GM12878 (cell line): ENCODE measurements at regions of chr9 and their contacts with region 1.

Region 1: DNA sequence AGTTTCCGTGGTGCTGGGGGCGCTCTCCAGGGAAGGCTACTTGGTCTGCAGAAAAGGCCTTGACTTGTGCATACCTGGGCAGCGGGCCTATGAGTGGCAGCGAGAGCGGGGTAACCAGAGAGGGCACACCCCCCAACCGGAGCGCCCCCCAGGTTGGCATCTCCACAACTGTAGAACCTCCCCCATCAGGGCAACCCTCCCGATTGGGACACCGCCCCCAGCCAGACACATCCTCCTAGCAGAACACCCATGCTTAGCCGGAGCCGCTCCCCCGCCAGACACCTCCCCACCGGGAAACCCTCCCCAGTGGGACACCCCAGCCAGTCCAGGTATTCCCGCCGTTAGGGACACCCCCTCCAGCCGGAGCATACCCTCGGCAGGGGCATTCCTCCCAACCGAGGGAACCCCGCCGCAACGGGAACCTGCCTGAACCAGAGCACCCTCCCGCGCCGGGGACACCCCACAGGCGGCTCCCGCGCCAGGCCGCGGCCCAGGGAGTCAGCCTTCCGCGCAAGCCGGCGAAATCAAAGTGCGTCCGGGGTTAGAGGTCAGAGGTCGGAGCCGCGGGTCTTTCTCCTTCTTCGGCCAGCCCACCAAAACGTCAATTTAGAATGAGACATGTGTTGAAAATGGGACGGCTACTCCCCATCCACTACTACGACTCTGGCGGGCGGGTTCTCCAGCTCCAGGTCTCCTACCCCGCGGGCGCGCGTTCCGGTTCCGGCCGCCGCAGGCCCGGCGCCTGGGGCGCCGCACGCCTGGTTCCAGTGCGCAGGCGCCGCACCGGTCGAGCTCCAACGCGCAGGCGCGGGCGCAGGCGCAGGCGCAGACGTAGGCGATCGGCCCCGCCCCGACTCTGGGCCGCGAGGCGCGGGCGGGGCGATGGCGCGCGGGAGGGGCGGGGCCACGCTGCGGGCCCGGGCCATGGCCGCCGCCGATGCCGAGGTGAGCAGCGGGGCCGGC is at the start of gene EHMT1:
- DNase-seq: peak; percentile 32
- ATAC-seq: peak; percentile 80
- H3K4me3 ChIP-seq: peak within 1 kb of the TSS; percentile 95
- H3K27ac ChIP-seq: peak within 1 kb of the TSS; percentile 96
- H3K4me1 ChIP-seq: peaks cover 12% of the 10 kb centered on the region
- H3K27me3 ChIP-seq: no peaks in the 10 kb centered on the region
- CTCF ChIP-seq: no peak
- EP300 ChIP-seq: no peak
- POLR2A ChIP-seq: peak; percentile 69; the same call in 1 of the 2 replicates
- RAD21 ChIP-seq: no peak
- polyA plus RNA-seq, gene EHMT1: 2.9 to 4.6 TPM

Region 2: GRCh38 chr9:137516144-137516917 is 102.1 kb before region 1 on chr9:
- CTCF ChIA-PET with region 1: no interaction called
- POLR2A ChIA-PET with region 1: no interaction called
- RAD21 ChIA-PET with region 1: no interaction called
- SMC1A ChIA-PET with region 1: no interaction called
- in situ Hi-C with region 1: no loop called
- intact Hi-C with region 1: no loop called
- DNase-seq: no peak
- ATAC-seq: no peak
- H3K4me3 ChIP-seq: no peak overlapping the region
- H3K27ac ChIP-seq: no peak overlapping the region
- H3K4me1 ChIP-seq: peaks cover 8% of the 10 kb centered on the region
- H3K27me3 ChIP-seq: no peaks in the 10 kb centered on the region
- CTCF ChIP-seq: no peak
- EP300 ChIP-seq: no peak
- POLR2A ChIP-seq: no peak
- RAD21 ChIP-seq: no peak

Region 3: DNA sequence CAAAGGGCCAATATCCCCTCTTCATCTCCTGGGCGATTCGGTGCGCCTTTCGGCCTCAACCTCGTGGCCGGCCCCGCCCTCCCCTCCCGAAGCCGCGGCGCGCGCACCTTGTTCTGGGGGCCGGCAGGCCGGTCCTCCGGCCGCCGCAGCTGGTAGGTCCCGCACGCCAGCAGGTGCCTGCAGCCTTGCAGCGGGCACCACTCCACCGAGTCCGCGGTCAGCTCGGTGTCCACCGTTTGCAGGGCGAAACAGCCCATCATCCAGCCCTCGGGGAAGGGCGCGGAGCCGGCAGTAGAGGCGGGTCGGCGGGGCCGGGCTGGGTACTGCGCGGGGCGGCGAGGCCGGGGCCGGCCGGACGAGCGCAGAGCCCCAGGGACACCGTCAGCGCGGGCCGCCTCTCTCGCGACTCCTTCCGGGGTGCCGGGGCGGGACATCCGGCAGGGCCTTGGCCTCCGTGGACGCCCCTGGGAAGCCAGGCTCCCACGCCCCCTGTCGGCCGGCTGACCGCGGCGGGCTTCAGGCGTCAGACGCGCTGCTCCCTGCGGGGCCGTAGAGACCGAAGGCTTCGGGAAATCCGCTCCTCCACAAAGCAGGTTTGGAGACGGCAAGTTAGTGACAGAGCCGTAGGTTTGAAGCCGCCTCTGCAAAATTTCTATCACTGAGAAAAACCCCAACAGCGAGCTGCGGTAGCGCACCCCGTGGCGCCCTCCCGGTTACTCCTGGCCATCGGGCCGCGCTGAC is 39.7 kb before region 1 on chr9 and contains the start of gene DPH7:
- CTCF ChIA-PET with region 1: interaction called, 6 read pairs
- POLR2A ChIA-PET with region 1: interaction called, 3 read pairs
- RAD21 ChIA-PET with region 1: no interaction called
- SMC1A ChIA-PET with region 1: no interaction called
- in situ Hi-C with region 1: no loop called
- intact Hi-C with region 1: loop called (anchors 2 kb)
- DNase-seq: peak; percentile 35
- ATAC-seq: peak; percentile 96
- H3K4me3 ChIP-seq: peak within 1 kb of the TSS; percentile 86
- H3K27ac ChIP-seq: peak within 1 kb of the TSS; percentile 65
- H3K4me1 ChIP-seq: peaks cover 16% of the 10 kb centered on the region
- H3K27me3 ChIP-seq: no peaks in the 10 kb centered on the region
- CTCF ChIP-seq: peak; percentile 95 to 97 (median 97)
- EP300 ChIP-seq: no peak
- POLR2A ChIP-seq: peak; percentile 91
- RAD21 ChIP-seq: no peak
- polyA plus RNA-seq, gene DPH7: 8.7 to 11.8 TPM

Region 4: DNA sequence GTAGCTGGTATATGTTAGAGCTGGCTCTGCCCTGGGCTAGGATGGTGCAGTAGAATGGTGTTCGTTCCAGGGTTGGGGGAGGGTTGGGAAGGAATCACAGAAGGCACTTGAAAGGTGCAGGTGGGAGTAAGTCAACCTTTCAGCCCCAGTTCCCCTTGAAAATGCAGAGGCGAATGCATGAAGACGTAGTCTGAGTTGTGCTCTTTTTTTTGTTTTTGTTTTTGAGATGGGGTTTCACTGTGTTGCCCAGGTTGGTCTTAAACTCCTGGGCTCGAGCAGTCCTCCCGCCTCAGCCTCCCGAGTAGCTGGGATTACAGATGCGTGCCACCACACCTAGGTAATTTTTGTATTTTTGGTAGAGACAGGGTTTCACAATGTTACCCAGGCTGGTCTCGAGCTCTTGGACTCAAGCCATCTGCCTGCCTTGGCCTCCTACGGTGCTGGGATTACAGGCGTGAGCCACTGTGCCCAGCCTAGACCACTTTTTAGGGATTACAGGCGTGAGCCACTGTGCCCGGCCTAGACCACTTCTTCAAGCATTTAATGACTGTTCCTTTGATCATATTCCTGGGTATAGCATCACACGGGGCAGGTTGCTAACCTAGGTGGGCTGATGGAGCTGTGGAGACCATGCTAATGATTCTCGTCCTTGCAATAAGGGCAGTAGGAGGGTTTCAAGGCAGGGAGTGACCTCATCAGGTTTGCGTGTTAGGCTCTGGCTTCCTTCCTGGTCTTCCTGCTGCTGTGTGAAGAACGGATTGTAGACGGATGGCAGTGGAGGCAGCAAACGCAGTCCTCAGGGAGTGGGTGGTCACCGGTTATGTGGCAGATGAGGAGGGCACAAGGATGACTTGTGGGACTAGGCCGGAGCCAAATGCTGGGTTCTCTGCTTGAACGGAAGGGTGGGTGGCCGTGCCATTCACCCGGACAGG is 14.1 kb after region 1 on chr9:
- CTCF ChIA-PET with region 1: interaction called, 4 read pairs
- POLR2A ChIA-PET with region 1: interaction called, 10 read pairs
- RAD21 ChIA-PET with region 1: interaction called, 3 read pairs
- SMC1A ChIA-PET with region 1: interaction called, 5 read pairs
- in situ Hi-C with region 1: no loop called
- intact Hi-C with region 1: no loop called
- DNase-seq: no peak
- ATAC-seq: no peak
- H3K4me3 ChIP-seq: no peak overlapping the region
- H3K27ac ChIP-seq: no peak overlapping the region
- H3K4me1 ChIP-seq: peaks cover 26% of the 10 kb centered on the region
- H3K27me3 ChIP-seq: no peaks in the 10 kb centered on the region
- CTCF ChIP-seq: no peak
- EP300 ChIP-seq: no peak
- POLR2A ChIP-seq: no peak
- RAD21 ChIP-seq: no peak